HEK293 (cell line): ENCODE measurements at regions of chr20 and their contacts with region 1.

Region 1: GRCh38 chr20:49508435-49509199 is 26.1 kb upstream of the KCNB1 start:
- H3K4me3 ChIP-seq: no peak overlapping the region
- H3K27ac ChIP-seq: no peak overlapping the region
- H3K4me1 ChIP-seq: no peaks in the 10 kb centered on the region
- CTCF ChIP-seq: peak; percentile 57

Region 2: GRCh38 chr20:49338061-49338460 is 170.6 kb before region 1 on chr20:
- CTCF ChIA-PET with region 1: interaction called, 83 read pairs
- POLR2A ChIA-PET with region 1: no interaction called
- H3K4me3 ChIP-seq: no peak overlapping the region
- H3K27ac ChIP-seq: no peak overlapping the region
- H3K4me1 ChIP-seq: no peaks in the 10 kb centered on the region
- CTCF ChIP-seq: no peak

Region 3: DNA sequence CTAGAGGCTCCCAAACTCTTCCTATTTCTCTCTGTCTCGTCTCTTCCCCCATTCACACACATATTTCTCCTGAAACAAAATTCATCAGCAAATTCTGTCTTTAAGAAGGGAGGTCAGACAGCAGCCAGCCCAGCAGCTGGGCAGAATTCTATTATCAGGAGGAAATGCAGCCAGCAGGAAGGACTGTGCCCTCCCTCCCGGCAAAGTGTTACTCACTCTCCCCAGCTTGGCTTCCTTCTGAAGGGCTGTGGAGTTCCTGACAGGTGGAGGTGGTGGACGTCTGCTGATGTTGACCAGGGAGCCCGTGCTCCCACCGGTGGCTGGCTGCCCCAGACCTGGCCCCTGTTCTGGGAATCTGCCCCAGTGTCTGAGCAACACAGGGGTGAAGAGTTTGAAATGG is 63.4 kb before region 1 on chr20:
- CTCF ChIA-PET with region 1: no interaction called
- POLR2A ChIA-PET with region 1: no interaction called
- H3K4me3 ChIP-seq: no peak overlapping the region
- H3K27ac ChIP-seq: no peak overlapping the region
- H3K4me1 ChIP-seq: no peaks in the 10 kb centered on the region
- CTCF ChIP-seq: no peak

Region 4: GRCh38 chr20:49484180-49485140 is 24.2 kb before region 1 on chr20:
- CTCF ChIA-PET with region 1: interaction called, 40 read pairs
- POLR2A ChIA-PET with region 1: no interaction called
- H3K4me3 ChIP-seq: peak overlapping the region; percentile 53
- H3K27ac ChIP-seq: no peak overlapping the region
- H3K4me1 ChIP-seq: 0 out of 2 replicates have a peak, but pooled peaks cover 4% of the 10 kb centered on the region
- CTCF ChIP-seq: peak; percentile 95

Region 5: DNA sequence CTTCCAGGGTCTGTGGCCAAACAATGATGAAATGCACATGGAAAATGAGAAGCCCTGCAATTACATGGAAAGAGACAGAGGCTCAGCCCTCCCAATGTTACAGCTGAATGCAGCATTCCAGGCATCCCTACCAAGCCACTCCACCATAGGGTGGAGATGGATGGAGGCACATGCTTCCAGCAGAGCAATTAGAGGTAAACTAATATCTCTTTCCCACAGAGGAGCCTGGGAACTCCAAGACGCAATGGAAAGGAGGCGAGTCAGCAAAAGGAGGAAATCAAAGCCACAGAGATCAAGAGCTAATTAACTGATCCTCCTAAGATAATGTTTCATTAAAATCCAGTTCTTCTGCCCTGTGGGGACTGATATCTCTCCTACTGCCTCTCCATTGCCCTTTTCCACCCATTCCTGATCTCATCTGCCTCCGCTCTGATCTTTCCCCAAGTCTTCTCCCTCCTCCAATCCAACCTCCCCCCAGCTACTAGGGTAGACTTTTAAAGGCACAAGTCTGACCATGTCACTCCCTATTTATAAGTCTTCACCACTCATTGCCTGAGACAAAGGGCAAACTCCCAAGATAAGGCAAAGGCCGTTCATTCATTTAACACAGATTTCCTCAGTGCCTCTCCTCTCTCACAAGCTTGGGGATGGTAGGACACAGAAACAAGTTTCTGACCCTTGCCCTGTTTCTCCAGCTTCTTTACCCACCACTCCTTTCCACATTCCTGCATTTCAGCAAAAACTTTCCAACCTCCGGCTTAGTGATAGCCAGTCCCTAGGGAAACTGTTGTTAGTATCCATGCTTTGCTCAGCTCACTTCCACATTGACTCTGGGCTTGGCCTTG is 11.8 kb before region 1 on chr20:
- CTCF ChIA-PET with region 1: interaction called, 18 read pairs
- POLR2A ChIA-PET with region 1: no interaction called
- H3K4me3 ChIP-seq: no peak overlapping the region
- H3K27ac ChIP-seq: no peak overlapping the region
- H3K4me1 ChIP-seq: no peaks in the 10 kb centered on the region
- CTCF ChIP-seq: no peak

Region 6: GRCh38 chr20:49519777-49520359 is 11.3 kb after region 1 on chr20:
- CTCF ChIA-PET with region 1: interaction called, 10 read pairs
- POLR2A ChIA-PET with region 1: no interaction called
- H3K4me3 ChIP-seq: no peak overlapping the region
- H3K27ac ChIP-seq: no peak overlapping the region
- H3K4me1 ChIP-seq: no peaks in the 10 kb centered on the region
- CTCF ChIP-seq: 0 out of 2 replicates have a peak, but pooled peaks have one; percentile 29

Region 7: DNA sequence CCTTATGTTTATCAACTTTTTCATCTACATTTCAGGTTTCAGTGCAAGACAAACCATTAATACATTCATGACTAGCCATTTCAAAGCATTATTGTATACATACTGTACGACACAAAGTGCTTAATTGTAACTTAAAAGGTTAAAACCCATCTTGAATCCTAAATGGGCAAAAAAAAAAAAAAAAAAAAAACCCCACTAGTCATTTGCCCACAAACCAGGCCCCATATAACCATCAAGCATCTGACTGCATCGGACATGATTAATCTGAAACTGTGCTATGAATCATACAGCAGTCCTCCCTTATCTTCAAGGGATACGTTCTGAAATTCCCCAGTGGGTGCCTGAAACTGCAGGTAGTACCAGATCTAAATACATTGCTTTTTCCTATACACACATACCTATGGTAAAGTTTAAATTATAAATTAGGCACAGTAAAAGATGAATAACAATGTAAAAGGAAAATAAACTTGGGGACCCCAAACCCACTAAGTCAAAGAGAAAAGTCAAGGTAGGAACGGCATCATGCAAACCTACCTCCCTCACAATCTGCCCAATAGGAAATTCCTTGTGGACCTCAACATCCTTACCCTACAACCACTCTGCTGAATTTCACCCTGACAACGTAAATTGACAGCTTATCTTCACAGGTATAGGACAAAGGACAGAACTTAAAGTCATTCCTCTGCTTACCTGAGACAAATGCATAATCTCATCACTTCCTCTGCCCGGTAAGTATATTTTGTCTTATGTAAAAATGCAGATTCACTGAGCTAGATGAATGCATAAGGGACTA is 190.8 kb after region 1 on chr20:
- CTCF ChIA-PET with region 1: no interaction called
- POLR2A ChIA-PET with region 1: no interaction called
- H3K4me3 ChIP-seq: no peak overlapping the region
- H3K27ac ChIP-seq: no peak overlapping the region
- H3K4me1 ChIP-seq: peaks cover 21% of the 10 kb centered on the region
- CTCF ChIP-seq: no peak